Naive thymus-derived CD4-positive, alpha-beta T cell (primary cell): ENCODE measurements at regions of chr2 and their contacts with region 1.

Region 1: DNA sequence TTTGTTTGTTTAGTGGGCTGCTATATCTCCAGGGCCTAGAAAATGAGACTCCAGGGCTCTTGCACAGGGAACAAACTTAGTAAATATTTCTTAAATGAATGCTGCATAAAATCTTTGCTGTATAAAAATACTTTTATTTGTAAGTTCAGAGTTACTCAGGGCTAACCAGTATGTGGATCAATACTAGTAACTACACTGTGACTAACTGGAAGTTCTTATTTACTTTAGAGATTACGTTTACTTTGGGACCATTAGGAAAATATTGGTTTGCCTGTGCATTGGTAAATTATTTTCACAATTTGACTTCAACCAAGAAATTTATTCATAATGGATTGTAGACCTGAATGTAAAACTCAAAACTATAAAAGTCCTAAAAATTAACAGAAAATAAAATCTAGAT is 575.5 kb downstream of the RNF144A start:
- DNase-seq: no peak
- ATAC-seq: no peak
- H3K4me3 ChIP-seq: no peak overlapping the region
- H3K4me3 Mint-ChIP-seq: no peak overlapping the region
- H3K27ac ChIP-seq: no peak overlapping the region
- H3K27ac Mint-ChIP-seq: peak overlapping the region in 1 of 9 donors; percentile 26
- H3K4me1 ChIP-seq: no peaks in the 10 kb centered on the region
- H3K4me1 Mint-ChIP-seq: peaks cover 9 to 29% (median 13%) of the 10 kb centered on the region in 7 donors
- H3K27me3 ChIP-seq: peaks cover 0 to 2% of the 10 kb centered on the region in 2 donors
- H3K27me3 Mint-ChIP-seq: no peaks in the 10 kb centered on the region

Region 2: GRCh38 chr2:7363906-7364305 is 128.8 kb before region 1 on chr2:
- CTCF ChIA-PET with region 1: no interaction called
- POLR2A ChIA-PET with region 1: no interaction called
- intact Hi-C with region 1: no loop called
- DNase-seq: no peak
- ATAC-seq: no peak
- H3K4me3 ChIP-seq: no peak overlapping the region
- H3K4me3 Mint-ChIP-seq: no peak overlapping the region
- H3K27ac ChIP-seq: no peak overlapping the region
- H3K27ac Mint-ChIP-seq: no peak overlapping the region
- H3K4me1 ChIP-seq: no peaks in the 10 kb centered on the region
- H3K4me1 Mint-ChIP-seq: no peaks in the 10 kb centered on the region
- H3K27me3 ChIP-seq: no peaks in the 10 kb centered on the region
- H3K27me3 Mint-ChIP-seq: peaks cover 0 to 3% (median 0%) of the 10 kb centered on the region in 5 donors

Region 3: GRCh38 chr2:7510350-7510749 is 17.6 kb after region 1 on chr2:
- CTCF ChIA-PET with region 1: no interaction called
- POLR2A ChIA-PET with region 1: no interaction called
- intact Hi-C with region 1: loop called in 1 of 2 experiments (anchors 2 kb)
- DNase-seq: no peak
- ATAC-seq: no peak
- H3K4me3 ChIP-seq: no peak overlapping the region
- H3K4me3 Mint-ChIP-seq: no peak overlapping the region
- H3K27ac ChIP-seq: no peak overlapping the region
- H3K27ac Mint-ChIP-seq: no peak overlapping the region
- H3K4me1 ChIP-seq: no peaks in the 10 kb centered on the region
- H3K4me1 Mint-ChIP-seq: peaks cover 2 to 48% (median 23%) of the 10 kb centered on the region in 7 donors
- H3K27me3 ChIP-seq: no peaks in the 10 kb centered on the region
- H3K27me3 Mint-ChIP-seq: no peaks in the 10 kb centered on the region

Region 4: GRCh38 chr2:7525746-7526145 is 33.0 kb after region 1 on chr2:
- CTCF ChIA-PET with region 1: no interaction called
- POLR2A ChIA-PET with region 1: no interaction called
- intact Hi-C with region 1: loop called in 1 of 2 experiments (anchors 5 kb)
- DNase-seq: no peak
- ATAC-seq: no peak
- H3K4me3 ChIP-seq: no peak overlapping the region
- H3K4me3 Mint-ChIP-seq: no peak overlapping the region
- H3K27ac ChIP-seq: no peak overlapping the region
- H3K27ac Mint-ChIP-seq: peak overlapping the region in 1 of 9 donors; percentile 27
- H3K4me1 ChIP-seq: peaks cover 0 to 5% of the 10 kb centered on the region in 2 donors
- H3K4me1 Mint-ChIP-seq: peaks cover 0 to 37% (median 17%) of the 10 kb centered on the region in 7 donors
- H3K27me3 ChIP-seq: no peaks in the 10 kb centered on the region
- H3K27me3 Mint-ChIP-seq: no peaks in the 10 kb centered on the region